BJ (cell line): ENCODE measurements at regions of chr17 and their contacts with region 1.

Region 1: GRCh38 chr17:63478791-63479494 is 2.1 kb downstream of the ACE start:
- DNase-seq: peak; percentile 63
- H3K4me3 ChIP-seq: no peak overlapping the region
- H3K27me3 ChIP-seq: no peaks in the 10 kb centered on the region; the same call in none of the 2 replicates
- CTCF ChIP-seq: peak; percentile 97

Region 2: GRCh38 chr17:63311416-63311937 is 167.5 kb before region 1 on chr17:
- CTCF ChIA-PET with region 1: no interaction called
- POLR2A ChIA-PET with region 1: no interaction called
- DNase-seq: no peak
- H3K4me3 ChIP-seq: no peak overlapping the region
- H3K27me3 ChIP-seq: no peaks in the 10 kb centered on the region
- CTCF ChIP-seq: no peak

Region 3: GRCh38 chr17:63425482-63425881 is 53.5 kb before region 1 on chr17:
- CTCF ChIA-PET with region 1: interaction called, 135 read pairs
- POLR2A ChIA-PET with region 1: interaction called, 3 read pairs
- DNase-seq: peak; percentile 16
- H3K4me3 ChIP-seq: no peak overlapping the region
- H3K27me3 ChIP-seq: no peaks in the 10 kb centered on the region
- CTCF ChIP-seq: peak; percentile 90

Region 4: GRCh38 chr17:63445979-63446691 is 32.8 kb before region 1 on chr17 and contains the start of gene CYB561:
- CTCF ChIA-PET with region 1: interaction called, 27 read pairs
- POLR2A ChIA-PET with region 1: no interaction called
- DNase-seq: no peak
- H3K4me3 ChIP-seq: peak within 1 kb of the TSS; percentile 45
- H3K27me3 ChIP-seq: no peaks in the 10 kb centered on the region
- CTCF ChIP-seq: peak; percentile 17; the same call in 1 of the 2 replicates
- polyA plus RNA-seq, gene CYB561: 13.0 and 17.1 TPM in 2 replicates

Region 5: DNA sequence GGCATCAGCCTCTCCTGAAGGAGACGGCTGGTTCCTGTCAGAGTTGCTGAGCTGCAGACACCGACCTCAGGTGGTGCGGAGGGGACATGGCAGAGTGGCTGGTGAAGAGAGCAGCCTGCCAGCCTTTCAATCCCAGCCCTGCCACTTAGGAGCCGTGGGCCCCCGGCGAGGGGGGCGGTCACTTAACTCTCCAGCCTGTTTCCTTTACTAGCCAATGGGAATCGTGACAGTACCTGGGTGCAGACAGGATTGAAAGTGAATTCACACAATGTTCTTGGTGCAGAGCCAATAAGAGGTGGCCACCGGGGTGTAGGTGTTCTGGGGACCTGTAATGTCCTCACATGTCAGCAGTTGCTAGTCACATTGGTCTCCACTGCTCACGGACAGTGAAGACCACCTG is 11.4 kb after region 1 on chr17:
- CTCF ChIA-PET with region 1: interaction called, 27 read pairs
- POLR2A ChIA-PET with region 1: no interaction called
- DNase-seq: no peak
- H3K4me3 ChIP-seq: no peak overlapping the region
- H3K27me3 ChIP-seq: peaks cover 2% of the 10 kb centered on the region; the same call in 1 of the 2 replicates
- CTCF ChIP-seq: no peak

Region 6: GRCh38 chr17:63611354-63611753 is 132.4 kb after region 1 on chr17:
- CTCF ChIA-PET with region 1: interaction called, 17 read pairs
- POLR2A ChIA-PET with region 1: no interaction called
- DNase-seq: no peak
- H3K4me3 ChIP-seq: no peak overlapping the region
- H3K27me3 ChIP-seq: no peaks in the 10 kb centered on the region
- CTCF ChIP-seq: no peak